Natural killer cell (primary cell): ENCODE measurements at regions of chr14 and their contacts with region 1.

Region 1: GRCh38 chr14:77053046-77053841 is 24.7 kb upstream of the IRF2BPL start:
- DNase-seq: peak; percentile 73 to 90
- ATAC-seq: peak; percentile 80 to 97 (median 96)
- H3K4me3 ChIP-seq: no peak overlapping the region
- H3K4me3 Mint-ChIP-seq: no peak overlapping the region
- H3K27ac ChIP-seq: no peak overlapping the region
- H3K27ac Mint-ChIP-seq: peak overlapping the region in 1 of 2 donors; percentile 78
- H3K4me1 ChIP-seq: peaks cover 10% of the 10 kb centered on the region
- H3K4me1 Mint-ChIP-seq: peaks cover 6 to 7% of the 10 kb centered on the region in 2 donors
- H3K27me3 ChIP-seq: no peaks in the 10 kb centered on the region
- H3K27me3 Mint-ChIP-seq: no peaks in the 10 kb centered on the region
- CTCF ChIP-seq: peak; percentile 98

Region 2: GRCh38 chr14:76876076-76876475 is 177.2 kb before region 1 on chr14:
- intact Hi-C with region 1: loop called (anchors 1 kb)
- DNase-seq: peak; percentile 30 to 73
- ATAC-seq: peak; percentile 46 to 86 (median 80)
- H3K4me3 ChIP-seq: no peak overlapping the region
- H3K4me3 Mint-ChIP-seq: no peak overlapping the region
- H3K27ac ChIP-seq: no peak overlapping the region
- H3K27ac Mint-ChIP-seq: no peak overlapping the region
- H3K4me1 ChIP-seq: no peaks in the 10 kb centered on the region
- H3K4me1 Mint-ChIP-seq: no peaks in the 10 kb centered on the region
- H3K27me3 ChIP-seq: no peaks in the 10 kb centered on the region
- H3K27me3 Mint-ChIP-seq: no peaks in the 10 kb centered on the region
- CTCF ChIP-seq: peak; percentile 86

Region 3: DNA sequence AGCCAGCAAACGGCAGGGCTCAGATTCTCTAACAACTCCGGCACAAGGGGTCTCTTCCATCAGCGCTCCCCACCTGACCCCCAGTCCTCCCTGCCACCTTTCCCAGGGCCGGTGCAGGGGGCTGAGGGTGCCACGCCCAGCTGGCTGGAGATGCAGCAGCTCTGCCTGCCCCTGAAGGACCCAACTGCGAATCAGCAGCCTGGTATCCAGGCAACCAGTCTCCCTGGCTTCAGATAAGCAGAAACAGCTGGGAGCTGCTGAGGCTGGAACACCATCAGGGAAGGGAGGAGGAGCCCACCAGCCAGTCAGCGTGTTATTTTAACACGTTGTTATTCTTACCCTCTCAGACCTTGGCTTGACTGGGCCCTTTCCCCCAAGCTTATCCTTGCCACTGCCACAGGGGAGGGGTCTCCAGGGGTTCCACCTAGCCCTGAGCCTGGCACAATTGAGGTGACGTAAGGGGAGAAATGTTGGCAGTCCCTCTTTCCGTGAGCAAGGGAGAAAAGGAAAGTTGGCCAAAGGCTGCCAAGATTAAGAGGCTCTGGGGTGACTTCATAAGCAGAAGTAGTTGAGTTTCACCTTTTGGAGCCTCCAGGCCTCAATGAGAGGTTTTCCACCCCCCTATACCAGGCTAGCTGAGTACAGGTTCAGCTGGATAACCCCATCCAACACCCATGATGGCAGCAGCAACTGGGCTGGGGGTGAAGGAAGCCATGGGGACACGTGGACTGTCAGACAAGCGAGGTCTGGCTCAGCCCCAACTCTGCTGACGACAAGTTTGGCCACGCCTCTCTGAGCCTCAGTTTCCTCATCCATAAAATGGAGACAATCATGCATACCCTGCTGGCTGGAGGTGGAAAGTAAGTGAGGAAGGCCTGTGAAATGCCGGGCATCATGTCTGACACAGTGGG is 115.8 kb before region 1 on chr14:
- intact Hi-C with region 1: no loop called
- DNase-seq: no peak
- ATAC-seq: no peak
- H3K4me3 ChIP-seq: no peak overlapping the region
- H3K4me3 Mint-ChIP-seq: no peak overlapping the region
- H3K27ac ChIP-seq: no peak overlapping the region
- H3K27ac Mint-ChIP-seq: no peak overlapping the region
- H3K4me1 ChIP-seq: no peaks in the 10 kb centered on the region
- H3K4me1 Mint-ChIP-seq: peaks cover under 1% of the 10 kb centered on the region in 2 donors
- H3K27me3 ChIP-seq: no peaks in the 10 kb centered on the region
- H3K27me3 Mint-ChIP-seq: peaks cover 0 to 2% of the 10 kb centered on the region in 2 donors
- CTCF ChIP-seq: no peak

Region 4: GRCh38 chr14:77091518-77091917 is 38.3 kb after region 1 on chr14:
- intact Hi-C with region 1: loop called (anchors 2 kb)
- DNase-seq: no peak
- ATAC-seq: no peak
- H3K4me3 ChIP-seq: no peak overlapping the region
- H3K4me3 Mint-ChIP-seq: no peak overlapping the region
- H3K27ac ChIP-seq: no peak overlapping the region
- H3K27ac Mint-ChIP-seq: no peak overlapping the region
- H3K4me1 ChIP-seq: peaks cover 2% of the 10 kb centered on the region
- H3K4me1 Mint-ChIP-seq: peaks cover 5 to 6% of the 10 kb centered on the region in 2 donors
- H3K27me3 ChIP-seq: no peaks in the 10 kb centered on the region
- H3K27me3 Mint-ChIP-seq: peaks cover 7 to 18% of the 10 kb centered on the region in 2 donors
- CTCF ChIP-seq: no peak

Region 5: GRCh38 chr14:77424862-77425261 is 371.6 kb after region 1 on chr14:
- intact Hi-C with region 1: no loop called
- DNase-seq: no peak
- ATAC-seq: no peak
- H3K4me3 ChIP-seq: no peak overlapping the region
- H3K4me3 Mint-ChIP-seq: no peak overlapping the region
- H3K27ac ChIP-seq: no peak overlapping the region
- H3K27ac Mint-ChIP-seq: no peak overlapping the region
- H3K4me1 ChIP-seq: no peaks in the 10 kb centered on the region
- H3K4me1 Mint-ChIP-seq: no peaks in the 10 kb centered on the region
- H3K27me3 ChIP-seq: no peaks in the 10 kb centered on the region
- H3K27me3 Mint-ChIP-seq: no peaks in the 10 kb centered on the region
- CTCF ChIP-seq: no peak